BJ (cell line): ENCODE measurements at regions of chr6 and their contacts with region 1.

Region 1: DNA sequence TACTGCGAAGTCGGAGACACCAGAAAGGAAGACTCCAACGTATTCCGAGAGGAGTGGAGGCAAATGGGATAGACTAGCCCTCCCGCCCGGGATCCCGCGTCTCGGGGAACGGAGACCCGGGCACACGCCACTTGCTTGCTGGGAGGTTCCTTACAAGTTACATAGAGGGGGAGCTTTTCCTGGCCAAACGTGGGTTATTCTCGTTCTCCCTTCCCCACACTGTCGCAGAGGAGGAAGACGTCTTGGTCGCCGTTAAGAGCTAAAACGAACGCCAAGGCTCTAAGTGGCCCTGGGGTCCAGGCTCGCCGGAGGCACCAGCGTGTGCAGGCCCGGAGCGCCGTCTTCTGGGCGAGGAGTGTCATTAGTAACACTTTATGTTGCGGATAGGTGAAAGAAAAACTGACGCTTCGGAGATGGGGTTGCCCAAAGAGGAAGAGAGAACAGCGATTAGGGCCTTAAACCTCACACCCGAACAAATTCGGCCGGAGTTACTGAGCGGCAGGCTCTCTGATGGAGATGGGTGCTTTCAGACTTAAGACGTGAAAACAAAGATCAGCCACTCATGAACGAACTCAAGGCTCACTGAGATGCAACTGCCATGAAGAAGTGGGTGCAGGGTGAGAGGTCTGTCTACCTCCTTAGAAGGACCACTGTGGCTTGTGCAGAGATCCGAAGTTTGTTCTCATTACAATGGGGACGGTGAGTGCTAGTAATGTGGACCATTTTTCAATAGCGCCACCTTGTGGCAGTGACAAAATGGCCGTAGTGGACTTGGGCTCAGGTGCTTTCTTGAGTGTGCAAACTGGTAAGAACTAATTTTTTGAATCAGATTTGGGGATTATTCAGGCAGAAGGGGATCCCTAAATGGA is 11.7 kb upstream of the ZNF311 start:
- DNase-seq: no peak
- H3K4me3 ChIP-seq: peak overlapping the region; percentile 39
- H3K27me3 ChIP-seq: peaks cover 2% of the 10 kb centered on the region
- CTCF ChIP-seq: peak; percentile 80

Region 2: DNA sequence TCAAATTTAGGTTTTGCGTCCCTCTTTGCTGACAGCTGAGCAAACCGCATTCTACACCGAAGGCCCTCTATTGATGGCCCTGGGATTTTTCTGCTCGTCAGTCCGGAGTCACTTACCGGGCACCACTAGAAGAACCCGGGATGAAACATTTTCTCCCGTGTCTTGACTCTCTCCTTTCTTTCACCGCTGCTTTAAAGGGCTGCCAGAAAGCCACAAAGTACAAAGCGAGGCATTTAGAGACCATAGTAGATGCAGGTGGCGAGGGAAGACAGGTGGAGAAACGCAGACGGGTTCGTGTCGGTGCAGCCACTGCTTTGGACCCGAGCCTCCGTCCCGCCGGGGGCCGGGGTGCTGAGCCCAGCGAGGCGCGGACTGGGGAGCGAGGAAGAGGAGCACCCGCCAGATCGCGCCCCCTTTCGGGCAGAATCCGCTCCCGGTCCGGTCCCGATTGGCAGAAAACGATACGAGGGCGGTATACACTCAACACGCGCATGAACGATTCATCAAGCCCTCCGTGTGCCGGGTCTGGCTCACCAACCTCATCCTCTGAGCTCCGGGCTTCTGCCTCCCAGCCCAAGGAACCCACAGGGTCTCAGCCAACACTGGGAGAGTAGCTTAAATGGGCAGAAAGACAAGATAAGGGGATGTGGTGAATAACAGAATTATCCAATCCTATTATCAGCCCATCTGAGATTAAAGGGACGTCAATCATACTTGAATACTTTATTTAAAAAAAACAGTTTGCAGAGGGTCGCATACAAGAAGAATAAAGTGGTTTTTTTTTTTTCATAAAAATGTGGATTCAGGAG is 178.0 kb before region 1 on chr6:
- CTCF ChIA-PET with region 1: interaction called, 52 read pairs
- POLR2A ChIA-PET with region 1: no interaction called
- DNase-seq: peak; percentile 19
- H3K4me3 ChIP-seq: peak overlapping the region; percentile 63
- H3K27me3 ChIP-seq: 0 out of 2 replicates have a peak, but pooled peaks cover 1% of the 10 kb centered on the region
- CTCF ChIP-seq: peak; percentile 86